ENCODE measurements at regions of chr4 and their contacts with region 1.

Region 1: DNA sequence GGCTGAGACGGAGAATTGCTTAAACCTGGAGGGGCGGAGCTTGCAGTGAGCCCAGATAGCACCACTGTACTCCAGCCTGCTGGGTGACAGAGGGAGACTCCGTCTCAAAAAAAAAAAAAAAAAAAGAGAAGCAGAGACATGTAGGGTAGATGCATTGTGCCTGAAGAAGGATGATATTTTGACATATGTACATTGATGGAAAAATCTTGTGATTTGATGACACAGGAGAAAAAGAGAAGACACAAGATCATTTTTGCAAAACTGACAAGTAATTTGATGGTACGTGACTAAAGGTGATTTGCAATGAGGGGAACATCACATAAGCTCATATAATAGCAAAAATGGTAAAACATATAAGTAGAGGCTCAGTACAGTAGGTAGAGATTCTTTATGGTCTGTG is 340.1 kb upstream of the FSTL5 start:
- DNase-seq: no peak
- H3K4me3 ChIP-seq: no peak overlapping the region
- H3K27ac ChIP-seq: no peak overlapping the region
- H3K4me1 ChIP-seq: no peaks in the 10 kb centered on the region
- H3K27me3 ChIP-seq: no peaks in the 10 kb centered on the region
- CTCF ChIP-seq: no peak
- EP300 ChIP-seq: no peak
- POLR2A ChIP-seq: no peak

Region 2: GRCh38 chr4:164012396-164013027 is 1508.6 kb after region 1 on chr4:
- intact Hi-C with region 1: loop called in 1 of 4 experiments (anchors 5 kb)
- DNase-seq: no peak
- H3K4me3 ChIP-seq: no peak overlapping the region
- H3K27ac ChIP-seq: no peak overlapping the region
- H3K4me1 ChIP-seq: no peaks in the 10 kb centered on the region
- H3K27me3 ChIP-seq: no peaks in the 10 kb centered on the region
- CTCF ChIP-seq: no peak
- EP300 ChIP-seq: no peak
- POLR2A ChIP-seq: no peak

Region 3: GRCh38 chr4:164188216-164188615 is 1684.3 kb after region 1 on chr4:
- intact Hi-C with region 1: no loop called
- DNase-seq: no peak
- H3K4me3 ChIP-seq: no peak overlapping the region
- H3K27ac ChIP-seq: no peak overlapping the region
- H3K4me1 ChIP-seq: no peaks in the 10 kb centered on the region
- H3K27me3 ChIP-seq: no peaks in the 10 kb centered on the region
- CTCF ChIP-seq: no peak
- EP300 ChIP-seq: no peak
- POLR2A ChIP-seq: no peak